WTC11 (cell line): ENCODE measurements at regions of chr1 and their contacts with region 1.

Region 1: DNA sequence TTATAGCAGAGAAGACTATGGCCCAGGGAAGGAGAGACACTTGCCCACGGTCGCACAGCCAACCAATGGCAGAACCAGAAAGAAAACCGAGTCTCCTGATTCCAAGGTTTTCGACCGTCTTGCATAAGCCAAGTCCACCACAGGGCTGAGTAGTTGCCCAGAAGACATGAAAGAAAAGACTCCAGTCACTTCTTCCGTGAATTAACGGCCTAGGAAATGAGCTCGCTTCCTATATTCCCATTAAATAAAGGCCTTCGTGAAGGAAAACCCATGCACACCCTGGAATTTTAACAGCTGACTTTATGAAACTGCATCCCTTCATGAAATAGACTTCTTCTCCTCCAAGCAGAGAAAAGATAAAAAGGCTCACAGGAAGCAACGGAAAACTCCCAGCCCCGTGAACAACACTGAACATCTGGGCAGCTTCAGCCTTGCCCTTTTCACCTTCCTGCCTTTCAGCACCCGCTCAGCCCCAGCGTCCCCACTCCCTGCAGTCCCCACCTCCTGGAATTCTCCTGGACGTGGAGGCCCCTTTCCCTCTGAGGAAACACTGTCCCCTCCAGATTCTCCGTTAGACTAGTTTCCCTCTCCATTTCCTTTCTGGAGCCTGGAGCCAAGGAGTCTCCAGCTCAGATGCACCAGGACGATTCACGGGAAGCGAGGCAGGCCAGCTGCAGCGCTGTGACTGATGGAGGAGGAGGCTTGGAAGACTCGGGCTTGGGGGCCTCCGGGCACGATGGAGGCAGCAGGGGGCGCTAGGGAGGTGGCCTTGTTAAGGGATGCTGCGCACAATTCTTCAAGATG is 2.7 kb upstream of the MYOC start:
- DNase-seq: peak; percentile 92
- ATAC-seq: peak; percentile 97
- H3K4me3 Mint-ChIP-seq: peak overlapping the region; percentile 51
- H3K27ac Mint-ChIP-seq: no peak overlapping the region
- H3K4me1 Mint-ChIP-seq: peaks cover 16% of the 10 kb centered on the region
- H3K27me3 Mint-ChIP-seq: no peaks in the 10 kb centered on the region
- CTCF ChIP-seq: peak; percentile 70

Region 2: DNA sequence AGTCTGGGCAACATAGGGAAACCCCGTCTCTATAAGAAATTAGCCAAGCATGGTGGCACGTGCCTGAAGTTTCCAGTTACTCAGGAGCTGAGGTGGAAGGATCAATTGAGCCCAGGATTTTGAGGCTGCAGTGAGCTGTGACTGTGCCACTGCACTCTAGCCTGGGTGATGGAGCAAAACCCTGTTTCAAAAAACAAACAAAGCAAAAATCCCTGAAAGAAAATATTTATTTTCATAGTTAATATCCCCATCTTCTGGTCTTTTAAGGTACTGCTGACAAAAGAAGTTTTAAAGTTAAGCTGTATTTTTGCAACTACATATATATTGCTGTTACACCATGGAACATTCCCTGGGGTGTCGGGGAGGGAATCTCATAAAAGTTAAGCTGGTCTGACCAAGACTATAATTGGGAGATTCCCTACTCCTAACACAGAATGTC is 60.7 kb after region 1 on chr1:
- CTCF ChIA-PET with region 1: interaction called, 40 read pairs
- POLR2A ChIA-PET with region 1: no interaction called
- DNase-seq: no peak
- ATAC-seq: peak; percentile 39; the same call in 1 of the 2 replicates
- H3K4me3 Mint-ChIP-seq: no peak overlapping the region
- H3K27ac Mint-ChIP-seq: 0 out of 2 replicates have a peak overlapping the region, but pooled peaks have one; percentile 23
- H3K4me1 Mint-ChIP-seq: no peaks in the 10 kb centered on the region
- H3K27me3 Mint-ChIP-seq: no peaks in the 10 kb centered on the region
- CTCF ChIP-seq: no peak

Region 3: GRCh38 chr1:171751221-171751620 is 96.1 kb after region 1 on chr1:
- CTCF ChIA-PET with region 1: no interaction called
- POLR2A ChIA-PET with region 1: no interaction called
- DNase-seq: no peak
- ATAC-seq: no peak
- H3K4me3 Mint-ChIP-seq: no peak overlapping the region
- H3K27ac Mint-ChIP-seq: no peak overlapping the region
- H3K4me1 Mint-ChIP-seq: peaks cover 16% of the 10 kb centered on the region
- H3K27me3 Mint-ChIP-seq: peaks cover 3% of the 10 kb centered on the region; the same call in 1 of the 2 replicates
- CTCF ChIP-seq: no peak

Region 4: GRCh38 chr1:171781176-171781875 is 126.2 kb after region 1 on chr1 and contains the start of gene METTL13:
- CTCF ChIA-PET with region 1: interaction called, 14 read pairs
- POLR2A ChIA-PET with region 1: no interaction called
- DNase-seq: peak; percentile 98
- ATAC-seq: peak; percentile 98
- H3K4me3 Mint-ChIP-seq: peak within 1 kb of the TSS; percentile 94
- H3K27ac Mint-ChIP-seq: peak within 1 kb of the TSS; percentile 98
- H3K4me1 Mint-ChIP-seq: peaks cover 12% of the 10 kb centered on the region
- H3K27me3 Mint-ChIP-seq: no peaks in the 10 kb centered on the region
- CTCF ChIP-seq: no peak
- total RNA-seq, gene METTL13: 40.4 to 46.5 TPM (median 43.6 TPM) in 3 replicates